ENCODE measurements at regions of chr14 and their contacts with region 1.

Region 1: DNA sequence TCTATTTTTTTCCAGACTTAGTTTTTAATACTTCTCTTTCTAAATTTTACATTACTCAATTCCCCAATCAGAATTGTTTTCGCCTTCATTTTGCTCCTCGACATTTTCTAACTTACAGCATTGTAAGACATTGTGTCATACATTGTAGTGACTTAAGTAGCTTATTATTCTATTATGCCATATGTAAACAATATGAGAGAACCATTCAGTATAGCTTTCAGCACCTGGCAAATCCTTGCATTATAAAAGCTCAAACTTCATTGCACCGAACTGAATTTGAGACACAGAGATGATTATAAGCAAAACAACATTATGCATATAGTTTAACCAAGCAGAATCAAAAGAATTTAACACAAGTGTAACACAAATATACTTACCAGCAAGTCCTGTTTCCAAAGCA is 46.8 kb downstream of the EXOC5 start:
- DNase-seq: no peak
- ATAC-seq: no peak
- H3K4me3 ChIP-seq: no peak overlapping the region
- H3K27ac ChIP-seq: no peak overlapping the region
- H3K4me1 ChIP-seq: no peaks in the 10 kb centered on the region
- H3K27me3 ChIP-seq: no peaks in the 10 kb centered on the region
- CTCF ChIP-seq: no peak
- POLR2A ChIP-seq: no peak
- RAD21 ChIP-seq: no peak

Region 2: GRCh38 chr14:56774503-56774902 is 447.4 kb before region 1 on chr14:
- CTCF ChIA-PET with region 1: no interaction called
- POLR2A ChIA-PET with region 1: no interaction called
- RAD21 ChIA-PET with region 1: no interaction called
- intact Hi-C with region 1: no loop called
- DNase-seq: no peak
- ATAC-seq: no peak
- H3K4me3 ChIP-seq: no peak overlapping the region
- H3K27ac ChIP-seq: no peak overlapping the region
- H3K4me1 ChIP-seq: no peaks in the 10 kb centered on the region
- H3K27me3 ChIP-seq: peaks cover 30% of the 10 kb centered on the region
- CTCF ChIP-seq: no peak
- POLR2A ChIP-seq: no peak
- RAD21 ChIP-seq: no peak

Region 3: GRCh38 chr14:57232006-57232405 is 10.1 kb after region 1 on chr14:
- CTCF ChIA-PET with region 1: no interaction called
- POLR2A ChIA-PET with region 1: no interaction called
- RAD21 ChIA-PET with region 1: no interaction called
- intact Hi-C with region 1: loop called (anchors 1 kb)
- DNase-seq: no peak
- ATAC-seq: no peak
- H3K4me3 ChIP-seq: no peak overlapping the region
- H3K27ac ChIP-seq: no peak overlapping the region
- H3K4me1 ChIP-seq: no peaks in the 10 kb centered on the region
- H3K27me3 ChIP-seq: no peaks in the 10 kb centered on the region
- CTCF ChIP-seq: no peak
- POLR2A ChIP-seq: no peak
- RAD21 ChIP-seq: no peak

Region 4: DNA sequence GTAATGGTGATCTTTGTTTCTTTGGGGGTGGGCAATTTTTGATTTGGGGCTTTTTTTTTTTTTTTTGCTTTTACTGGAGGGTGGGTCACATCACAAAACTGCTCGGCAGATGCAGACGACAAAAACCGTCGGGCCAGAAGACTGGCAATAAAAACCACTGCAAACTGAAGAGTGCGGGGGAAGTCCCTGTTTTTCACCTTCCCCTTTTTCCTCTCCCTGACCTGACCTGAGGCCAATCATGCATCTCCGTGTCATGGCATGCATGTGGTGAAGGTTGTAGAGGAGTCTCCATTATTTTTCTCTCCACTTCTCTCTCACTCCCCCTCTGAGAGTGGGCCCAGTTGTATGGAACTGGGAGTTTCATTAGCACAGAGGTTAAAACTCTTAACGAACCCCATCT is 104.3 kb after region 1 on chr14:
- CTCF ChIA-PET with region 1: no interaction called
- POLR2A ChIA-PET with region 1: no interaction called
- RAD21 ChIA-PET with region 1: no interaction called
- intact Hi-C with region 1: no loop called
- DNase-seq: no peak
- ATAC-seq: no peak
- H3K4me3 ChIP-seq: no peak overlapping the region
- H3K27ac ChIP-seq: no peak overlapping the region
- H3K4me1 ChIP-seq: no peaks in the 10 kb centered on the region
- H3K27me3 ChIP-seq: 0 out of 2 replicates have a peak, but pooled peaks cover 3% of the 10 kb centered on the region
- CTCF ChIP-seq: no peak
- POLR2A ChIP-seq: no peak
- RAD21 ChIP-seq: no peak

Measured in HCT116 (cell line).